ENCODE measurements at regions of chr5 and their contacts with region 1.

Region 1: GRCh38 chr5:36739751-36740221 is 133.4 kb downstream of the SLC1A3 start:
- DNase-seq: peak; percentile 82 to 90 (median 83)
- ATAC-seq: peak; percentile 78
- H3K4me3 ChIP-seq: no peak overlapping the region
- H3K27ac ChIP-seq: peak overlapping the region; percentile 66; the same call in 2 of the 3 replicates
- H3K4me1 ChIP-seq: peaks cover 11 to 25% of the 10 kb centered on the region in 2 experiments
- H3K27me3 ChIP-seq: peaks cover 2 to 9% of the 10 kb centered on the region in 2 experiments; a peak in 3 of 5 replicates
- CTCF ChIP-seq: peak; percentile 85 to 96 (median 96)
- EP300 ChIP-seq: peak; percentile 83
- POLR2A ChIP-seq: no peak
- RAD21 ChIP-seq: peak; percentile 91 to 94

Region 2: DNA sequence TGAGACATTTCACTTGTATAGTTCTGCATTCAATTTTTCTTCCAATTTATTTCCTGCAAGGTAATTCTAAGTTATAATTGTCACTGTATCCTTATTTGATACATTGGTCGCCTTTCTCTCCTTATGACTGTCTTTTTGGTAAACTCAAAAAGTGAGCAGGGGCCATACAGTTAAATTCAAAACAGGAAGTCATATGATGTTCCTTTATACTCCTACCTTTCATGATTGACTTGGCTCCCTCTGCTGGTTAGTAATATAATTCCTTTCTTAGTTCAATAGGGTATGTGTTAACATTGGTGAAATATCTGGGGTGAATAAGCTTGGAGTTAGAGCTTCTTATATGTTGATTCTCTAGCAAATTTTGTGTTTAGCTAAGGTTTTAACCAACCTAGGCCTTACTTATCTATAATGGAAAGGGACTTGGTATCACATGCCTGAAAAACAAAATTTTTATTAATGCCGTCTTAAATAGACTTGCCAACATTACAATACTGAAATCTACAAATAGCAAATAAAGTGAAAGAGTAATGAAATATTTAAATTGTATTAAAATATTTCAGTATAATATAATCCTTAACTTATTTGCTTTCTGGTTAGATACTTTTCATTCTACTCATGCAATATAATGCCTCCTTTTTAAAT is 130.7 kb after region 1 on chr5:
- CTCF ChIA-PET with region 1: interaction called, 12 read pairs
- POLR2A ChIA-PET with region 1: interaction called, 7 read pairs
- in situ Hi-C with region 1: loop called (anchors 5 kb)
- intact Hi-C with region 1: loop called (anchors 1 kb)
- DNase-seq: peak; percentile 42 to 82 (median 60)
- ATAC-seq: peak; percentile 67
- H3K4me3 ChIP-seq: no peak overlapping the region
- H3K27ac ChIP-seq: no peak overlapping the region
- H3K4me1 ChIP-seq: peaks cover 0 to 3% of the 10 kb centered on the region in 2 experiments; a peak in 3 of 5 replicates
- H3K27me3 ChIP-seq: no peaks in the 10 kb centered on the region
- CTCF ChIP-seq: peak; percentile 64 to 86 (median 68); a peak in 5 of 6 replicates
- EP300 ChIP-seq: 0 out of 2 replicates have a peak, but pooled peaks have one; percentile 24
- POLR2A ChIP-seq: 0 out of 2 replicates have a peak, but pooled peaks have one; percentile 19
- RAD21 ChIP-seq: peak; percentile 83 to 85

Region 3: GRCh38 chr5:36944607-36945225 is 204.9 kb after region 1 on chr5:
- CTCF ChIA-PET with region 1: interaction called, 8 read pairs
- POLR2A ChIA-PET with region 1: interaction called, 3 read pairs
- in situ Hi-C with region 1: loop called (anchors 10 kb)
- intact Hi-C with region 1: loop called (anchors 2 kb)
- DNase-seq: peak; percentile 12 to 67 (median 20)
- ATAC-seq: peak; percentile 46; the same call in 1 of the 3 replicates
- H3K4me3 ChIP-seq: no peak overlapping the region
- H3K27ac ChIP-seq: no peak overlapping the region
- H3K4me1 ChIP-seq: no peaks in the 10 kb centered on the region
- H3K27me3 ChIP-seq: no peaks in the 10 kb centered on the region
- CTCF ChIP-seq: peak in 2 of 3 experiments; percentile 41 to 63; a peak in 4 of 6 replicates
- EP300 ChIP-seq: no peak
- POLR2A ChIP-seq: no peak
- RAD21 ChIP-seq: peak; percentile 35 to 46

Region 4: GRCh38 chr5:37111426-37112382 is 371.9 kb after region 1 on chr5:
- CTCF ChIA-PET with region 1: interaction called, 4 read pairs
- POLR2A ChIA-PET with region 1: no interaction called
- in situ Hi-C with region 1: no loop called
- intact Hi-C with region 1: loop called (anchors 10 kb)
- DNase-seq: no peak
- ATAC-seq: no peak
- H3K4me3 ChIP-seq: no peak overlapping the region
- H3K27ac ChIP-seq: no peak overlapping the region
- H3K4me1 ChIP-seq: no peaks in the 10 kb centered on the region
- H3K27me3 ChIP-seq: peaks cover 4 to 8% of the 10 kb centered on the region in 2 experiments; a peak in 2 of 5 replicates
- CTCF ChIP-seq: no peak
- EP300 ChIP-seq: no peak
- POLR2A ChIP-seq: no peak
- RAD21 ChIP-seq: no peak

Region 5: GRCh38 chr5:38193015-38193581 is 1453.3 kb after region 1 on chr5:
- CTCF ChIA-PET with region 1: interaction called, 4 read pairs
- POLR2A ChIA-PET with region 1: no interaction called
- in situ Hi-C with region 1: loop called (anchors 25 kb)
- intact Hi-C with region 1: loop called (anchors 10 kb)
- DNase-seq: peak; percentile 74 to 85 (median 82)
- ATAC-seq: peak; percentile 89
- H3K4me3 ChIP-seq: no peak overlapping the region
- H3K27ac ChIP-seq: no peak overlapping the region
- H3K4me1 ChIP-seq: 0 out of 5 replicates have a peak, but pooled peaks cover 0 to 2% of the 10 kb centered on the region in 2 experiments
- H3K27me3 ChIP-seq: peaks cover 17 to 50% of the 10 kb centered on the region in 2 experiments
- CTCF ChIP-seq: peak; percentile 82 to 93 (median 91)
- EP300 ChIP-seq: no peak
- POLR2A ChIP-seq: no peak
- RAD21 ChIP-seq: peak; percentile 92 to 93